T-cell (primary cell): ENCODE measurements at regions of chr19 and their contacts with region 1.

Region 1: DNA sequence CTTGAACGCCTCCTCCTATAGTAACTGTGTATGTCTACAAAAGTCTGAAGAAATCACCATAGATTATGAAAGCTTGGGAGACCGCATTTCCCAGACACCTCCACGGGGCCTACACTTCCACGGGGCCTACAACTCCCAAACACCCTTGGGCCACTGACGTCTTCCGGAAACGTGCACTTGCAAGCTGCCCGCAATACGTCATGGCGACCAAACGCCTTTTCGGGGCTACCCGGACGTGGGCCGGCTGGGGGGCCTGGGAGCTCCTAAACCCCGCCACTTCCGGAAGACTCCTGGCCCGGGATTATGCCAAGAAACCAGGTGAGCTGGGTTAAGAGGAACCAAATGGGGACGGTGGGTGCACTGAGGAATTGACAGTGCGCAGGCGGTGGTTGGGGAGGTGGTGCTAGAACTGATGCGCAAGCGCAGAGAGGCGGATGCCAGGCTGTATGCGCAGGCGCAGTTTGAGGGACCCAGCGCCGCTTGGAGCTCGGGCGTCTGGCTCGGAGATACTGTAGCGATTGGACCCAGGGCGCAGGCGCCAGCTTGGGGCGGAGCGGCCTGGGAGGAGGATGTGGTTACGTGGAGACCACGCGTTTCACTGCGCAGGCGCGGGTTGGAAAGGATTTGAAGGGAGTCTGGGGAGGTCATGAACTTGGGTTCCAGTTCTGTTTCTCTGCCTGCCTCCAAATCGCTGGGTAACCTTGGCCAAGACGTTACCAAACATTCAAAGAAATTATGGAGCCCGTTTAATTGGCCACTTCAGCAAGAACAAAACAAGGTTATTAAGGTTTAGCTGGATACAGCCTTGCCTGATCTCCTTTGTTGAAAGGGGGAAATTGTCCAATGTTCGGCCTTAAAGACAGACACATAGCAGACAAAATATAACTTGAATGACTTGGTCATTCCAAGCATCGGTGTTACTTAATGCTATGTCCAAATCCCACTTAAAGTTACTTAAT is at the start of gene MRPL54:
- DNase-seq: peak; percentile 98 to 100 (median 99)
- ATAC-seq: peak; percentile 86 to 87 (median 87)
- H3K4me3 ChIP-seq: peak within 1 kb of the TSS; percentile 85 to 98
- H3K4me3 Mint-ChIP-seq: peak within 1 kb of the TSS; percentile 97 to 98 (median 97)
- H3K27ac ChIP-seq: peak within 1 kb of the TSS; percentile 98
- H3K27ac Mint-ChIP-seq: peak within 1 kb of the TSS; percentile 100
- H3K4me1 ChIP-seq: peaks cover 15 to 70% of the 10 kb centered on the region in 2 experiments
- H3K4me1 Mint-ChIP-seq: peaks cover 45 to 57% (median 50%) of the 10 kb centered on the region in 3 donors
- H3K27me3 ChIP-seq: no peaks in the 10 kb centered on the region
- H3K27me3 Mint-ChIP-seq: no peaks in the 10 kb centered on the region
- total RNA-seq, gene MRPL54: 46.9 to 77.8 (median 52.2) TPM

Region 2: GRCh38 chr19:3499738-3500428 is 262.9 kb before region 1 on chr19:
- CTCF ChIA-PET with region 1: no interaction called
- POLR2A ChIA-PET with region 1: interaction called in 1 of 2 experiments, 10 read pairs
- DNase-seq: no peak
- ATAC-seq: peak in 3 of 4 experiments; percentile 1 to 11 (median 4)
- H3K4me3 ChIP-seq: peak overlapping the region; percentile 65 to 95
- H3K4me3 Mint-ChIP-seq: peak overlapping the region; percentile 91 to 96 (median 91)
- H3K27ac ChIP-seq: peak overlapping the region; percentile 97
- H3K27ac Mint-ChIP-seq: peak overlapping the region; percentile 99
- H3K4me1 ChIP-seq: peaks cover 6 to 23% of the 10 kb centered on the region in 2 experiments
- H3K4me1 Mint-ChIP-seq: peaks cover 26 to 38% (median 33%) of the 10 kb centered on the region in 3 donors
- H3K27me3 ChIP-seq: no peaks in the 10 kb centered on the region
- H3K27me3 Mint-ChIP-seq: no peaks in the 10 kb centered on the region

Region 3: DNA sequence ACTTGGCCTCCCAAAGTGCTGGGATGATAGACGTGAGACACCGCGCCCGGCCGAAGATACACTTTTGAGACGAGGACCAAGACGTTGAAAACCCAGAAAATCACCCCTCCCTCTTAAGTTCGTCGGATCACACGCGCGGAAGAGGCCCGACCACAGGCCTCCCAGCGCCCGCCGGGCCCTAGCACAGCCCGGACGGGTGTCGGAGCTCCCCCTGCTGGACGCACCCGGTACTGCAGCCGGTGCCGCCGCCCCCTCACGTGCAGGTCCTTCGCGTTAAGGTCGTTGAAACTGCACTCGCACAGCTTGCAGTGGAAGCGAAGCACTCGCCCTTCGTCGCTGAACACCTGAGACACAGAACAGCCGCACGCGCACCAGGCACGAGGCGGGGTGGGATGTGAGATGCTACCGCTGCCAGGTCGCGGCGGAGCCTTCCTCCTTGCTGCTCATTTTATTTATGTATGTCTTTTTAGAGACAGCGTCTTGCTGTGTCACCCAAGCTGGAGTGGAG is 59.1 kb after region 1 on chr19:
- CTCF ChIA-PET with region 1: interaction called in 1 of 2 experiments, 16 read pairs
- POLR2A ChIA-PET with region 1: interaction called in 1 of 2 experiments, 3 read pairs
- DNase-seq: peak; percentile 61 to 94 (median 85)
- ATAC-seq: peak; percentile 93 to 97 (median 95)
- H3K4me3 ChIP-seq: peak overlapping the region in 1 of 2 donors; percentile 18
- H3K4me3 Mint-ChIP-seq: peak overlapping the region; percentile 17 to 46 (median 41)
- H3K27ac ChIP-seq: no peak overlapping the region
- H3K27ac Mint-ChIP-seq: peak overlapping the region in 1 of 2 donors; percentile 29
- H3K4me1 ChIP-seq: peaks cover 10 to 43% of the 10 kb centered on the region in 2 experiments
- H3K4me1 Mint-ChIP-seq: peaks cover 17 to 19% (median 19%) of the 10 kb centered on the region in 3 donors
- H3K27me3 ChIP-seq: peaks cover 0 to 8% of the 10 kb centered on the region in 2 experiments
- H3K27me3 Mint-ChIP-seq: no peaks in the 10 kb centered on the region

Region 4: DNA sequence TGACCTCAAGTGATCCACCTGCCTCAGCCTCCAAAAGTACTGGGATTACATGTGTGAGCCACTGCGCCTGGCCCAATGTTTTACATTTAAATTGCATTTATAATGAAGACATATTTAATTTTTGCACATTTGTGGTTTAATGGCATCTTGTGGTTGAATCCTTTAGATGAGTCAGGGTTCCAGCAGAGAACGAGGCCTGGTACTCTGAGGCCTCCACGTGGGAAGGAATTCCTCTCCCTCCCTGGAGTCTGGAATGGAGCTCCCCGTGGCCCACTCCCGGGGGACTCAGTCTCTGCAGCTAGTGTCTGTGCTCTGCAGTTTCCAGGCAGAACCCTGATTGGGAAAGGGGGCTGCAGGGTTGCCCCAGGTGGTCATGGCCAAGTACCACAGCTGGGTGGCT is 81.8 kb after region 1 on chr19:
- CTCF ChIA-PET with region 1: no interaction called
- POLR2A ChIA-PET with region 1: no interaction called
- DNase-seq: no peak
- ATAC-seq: no peak
- H3K4me3 ChIP-seq: no peak overlapping the region
- H3K4me3 Mint-ChIP-seq: no peak overlapping the region
- H3K27ac ChIP-seq: no peak overlapping the region
- H3K27ac Mint-ChIP-seq: no peak overlapping the region
- H3K4me1 ChIP-seq: no peaks in the 10 kb centered on the region
- H3K4me1 Mint-ChIP-seq: no peaks in the 10 kb centered on the region
- H3K27me3 ChIP-seq: peaks cover 0 to 22% of the 10 kb centered on the region in 2 experiments
- H3K27me3 Mint-ChIP-seq: peaks cover 4% of the 10 kb centered on the region in 2 donors